ENCODE measurements at regions of chr6 and their contacts with region 1.

Region 1: GRCh38 chr6:15245361-15246216 is at the start of gene JARID2:
- DNase-seq: peak; percentile 99
- H3K4me3 ChIP-seq: peak within 1 kb of the TSS; percentile 60 to 69
- H3K27ac ChIP-seq: peak within 1 kb of the TSS; percentile 88 to 97
- H3K4me1 ChIP-seq: peaks cover 0 to 24% (median 7%) of the 10 kb centered on the region in 4 donors
- H3K27me3 ChIP-seq: no peaks in the 10 kb centered on the region
- CTCF ChIP-seq: no peak

Region 2: DNA sequence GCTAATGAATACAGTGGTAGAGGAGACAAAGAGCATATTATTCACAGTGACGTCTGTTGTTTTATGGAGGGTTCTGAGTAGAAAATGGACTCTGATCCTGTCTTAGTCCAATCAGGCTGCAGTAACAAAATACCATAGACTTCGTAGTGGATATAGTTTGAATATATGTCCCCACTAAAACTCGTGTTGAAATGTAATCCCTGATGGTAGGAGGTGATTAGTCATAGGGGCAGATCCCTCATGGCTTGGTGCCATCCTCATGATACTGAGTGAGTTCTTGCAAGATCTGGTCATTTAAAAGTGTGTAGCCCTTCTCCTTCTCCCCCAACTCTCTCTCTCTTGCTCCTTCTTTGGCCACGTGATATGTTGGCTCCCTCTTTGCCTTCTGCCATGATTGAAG is 1045.5 kb before region 1 on chr6:
- intact Hi-C with region 1: loop called (anchors 10 kb)
- DNase-seq: no peak
- H3K4me3 ChIP-seq: no peak overlapping the region
- H3K27ac ChIP-seq: no peak overlapping the region
- H3K4me1 ChIP-seq: no peaks in the 10 kb centered on the region
- H3K27me3 ChIP-seq: no peaks in the 10 kb centered on the region
- CTCF ChIP-seq: no peak

Region 3: GRCh38 chr6:15429141-15430110 is 183.8 kb after region 1 on chr6:
- intact Hi-C with region 1: loop called (anchors 10 kb)
- DNase-seq: no peak
- H3K4me3 ChIP-seq: no peak overlapping the region
- H3K27ac ChIP-seq: no peak overlapping the region
- H3K4me1 ChIP-seq: peaks cover 0 to 55% (median 27%) of the 10 kb centered on the region in 4 donors
- H3K27me3 ChIP-seq: no peaks in the 10 kb centered on the region
- CTCF ChIP-seq: no peak

Region 4: DNA sequence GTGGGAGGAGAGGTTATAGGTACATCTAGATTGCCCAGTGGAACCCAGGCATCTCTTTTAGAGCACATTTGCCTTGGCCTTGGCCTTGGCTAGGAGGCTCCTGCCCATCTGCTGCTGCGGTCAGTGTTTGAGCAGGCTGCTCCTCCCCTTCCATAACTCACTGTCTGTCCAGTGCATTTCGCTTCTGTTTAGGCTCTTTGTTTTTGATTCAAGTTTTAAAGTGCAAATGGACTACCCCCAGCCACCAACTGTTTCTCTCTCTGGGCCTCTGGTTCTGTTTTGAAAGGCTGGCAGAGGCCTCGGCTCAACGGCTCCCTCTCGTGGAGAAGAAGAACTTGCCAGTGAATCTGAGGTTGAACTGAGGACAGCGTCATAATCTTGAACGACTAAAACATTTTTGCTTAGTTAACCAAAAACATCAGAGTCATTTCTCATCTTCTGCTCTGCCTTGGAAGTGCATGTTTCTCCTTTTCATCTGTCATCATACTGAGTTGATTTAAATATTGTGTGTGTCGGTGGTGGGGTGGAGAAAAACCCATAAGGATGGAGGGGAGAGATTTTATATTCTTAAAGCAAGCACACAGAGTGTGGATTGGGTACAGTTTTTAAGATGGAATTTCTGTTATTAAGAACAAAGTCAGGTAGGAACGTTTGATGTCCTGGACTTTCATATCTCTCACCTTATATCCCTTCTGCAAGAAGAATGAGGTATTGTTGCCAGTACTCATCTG is 245.8 kb after region 1 on chr6:
- intact Hi-C with region 1: loop called (anchors 10 kb)
- DNase-seq: peak; percentile 75 to 84
- H3K4me3 ChIP-seq: no peak overlapping the region
- H3K27ac ChIP-seq: no peak overlapping the region
- H3K4me1 ChIP-seq: peaks cover 0 to 29% (median 12%) of the 10 kb centered on the region in 4 donors
- H3K27me3 ChIP-seq: no peaks in the 10 kb centered on the region
- CTCF ChIP-seq: peak; percentile 79 to 93

Measured in tibial artery (tissue), 4 donors.